ENCODE measurements at regions of chr11 and their contacts with region 1.

Region 1: GRCh38 chr11:1546536-1547400 is 25.3 kb downstream of the DUSP8 start:
- DNase-seq: no peak
- H3K4me3 ChIP-seq: peak overlapping the region; percentile 21; the same call in 1 of the 2 replicates
- H3K27me3 ChIP-seq: peaks cover 30% of the 10 kb centered on the region
- CTCF ChIP-seq: peak; percentile 49

Region 2: GRCh38 chr11:1534682-1535081 is 12.1 kb before region 1 on chr11:
- CTCF ChIA-PET with region 1: interaction called, 25 read pairs
- POLR2A ChIA-PET with region 1: no interaction called
- DNase-seq: no peak
- H3K4me3 ChIP-seq: no peak overlapping the region
- H3K27me3 ChIP-seq: no peaks in the 10 kb centered on the region
- CTCF ChIP-seq: no peak

Region 3: DNA sequence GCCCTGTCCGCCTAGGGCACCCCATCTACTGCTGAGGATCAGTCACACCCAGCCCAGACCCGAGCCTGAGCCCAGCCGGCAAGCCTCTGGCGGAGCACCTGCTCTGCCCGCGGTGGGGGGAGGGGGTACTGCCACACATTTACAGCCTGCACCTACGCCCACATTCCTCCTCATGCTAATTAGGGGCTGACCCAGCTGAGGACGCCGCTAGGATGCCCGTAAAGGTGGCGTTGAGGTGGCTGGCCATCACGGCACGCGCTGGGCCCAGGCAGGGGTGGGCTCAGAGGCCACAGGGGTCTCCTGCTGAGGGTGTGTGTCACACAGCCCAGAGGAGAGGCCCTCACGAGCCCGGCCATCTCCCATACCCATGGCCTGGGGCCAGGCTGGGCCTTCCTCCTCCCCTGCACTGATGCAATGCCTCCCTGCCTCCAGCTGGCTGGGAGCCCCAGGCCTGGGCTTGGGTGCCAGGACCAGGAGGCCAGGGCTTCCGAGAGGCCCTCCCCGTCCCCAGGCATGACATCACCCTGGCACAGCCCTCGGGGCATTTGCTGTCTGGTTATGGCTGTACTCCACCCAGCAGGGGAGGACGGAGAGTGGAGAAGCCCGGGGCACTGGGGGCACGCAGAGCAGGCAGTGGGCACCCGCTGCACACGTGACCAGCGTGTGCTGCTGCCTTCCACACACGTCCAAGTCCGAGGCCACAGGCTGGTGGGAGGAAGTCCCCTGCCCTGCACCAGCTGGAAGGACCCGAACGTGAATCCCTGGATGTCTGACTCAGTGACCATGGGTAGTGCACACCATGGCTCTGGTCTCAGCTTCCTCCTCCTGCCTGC is 12.6 kb after region 1 on chr11:
- CTCF ChIA-PET with region 1: interaction called, 29 read pairs
- POLR2A ChIA-PET with region 1: no interaction called
- DNase-seq: peak; percentile 39
- H3K4me3 ChIP-seq: no peak overlapping the region
- H3K27me3 ChIP-seq: no peaks in the 10 kb centered on the region
- CTCF ChIP-seq: no peak

Region 4: GRCh38 chr11:1564535-1565172 is 17.9 kb after region 1 on chr11:
- CTCF ChIA-PET with region 1: interaction called, 301 read pairs
- POLR2A ChIA-PET with region 1: no interaction called
- DNase-seq: peak; percentile 60
- H3K4me3 ChIP-seq: no peak overlapping the region
- H3K27me3 ChIP-seq: no peaks in the 10 kb centered on the region
- CTCF ChIP-seq: no peak

Region 5: DNA sequence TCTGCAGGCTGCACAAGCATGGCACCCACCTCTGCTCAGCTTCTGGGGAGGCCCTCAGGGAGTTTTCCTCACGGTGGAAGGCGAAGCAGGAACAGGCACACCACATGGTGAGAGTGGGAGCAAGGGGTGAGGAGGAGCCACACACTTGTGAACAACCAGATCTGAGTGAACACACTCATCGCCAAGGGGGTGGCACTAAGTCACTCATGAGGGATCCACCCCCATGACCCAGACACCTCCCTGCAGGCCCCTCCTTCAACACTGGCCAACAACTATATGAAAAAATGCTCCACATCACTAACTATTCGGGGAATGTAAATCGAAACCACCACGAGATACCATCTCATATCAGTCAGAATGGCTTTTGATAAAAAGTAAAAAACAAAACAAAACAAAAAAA is 52.0 kb after region 1 on chr11:
- CTCF ChIA-PET with region 1: interaction called, 10 read pairs
- POLR2A ChIA-PET with region 1: no interaction called
- DNase-seq: no peak
- H3K4me3 ChIP-seq: no peak overlapping the region
- H3K27me3 ChIP-seq: peaks cover 16% of the 10 kb centered on the region
- CTCF ChIP-seq: no peak

Region 6: GRCh38 chr11:1628506-1629325 is 81.9 kb after region 1 on chr11:
- CTCF ChIA-PET with region 1: interaction called, 11 read pairs
- POLR2A ChIA-PET with region 1: no interaction called
- DNase-seq: no peak
- H3K4me3 ChIP-seq: no peak overlapping the region
- H3K27me3 ChIP-seq: peaks cover 20% of the 10 kb centered on the region
- CTCF ChIP-seq: peak; percentile 94

Measured in BJ (cell line).